ENCODE measurements at regions of chr11 and their contacts with region 1.

Region 1: GRCh38 chr11:19742588-19743292 is 30.1 kb downstream of the NAV2 start:
- DNase-seq: peak; percentile 83
- H3K4me3 ChIP-seq: no peak overlapping the region
- H3K27ac ChIP-seq: peak overlapping the region in 1 of 4 donors; percentile 50
- H3K4me1 ChIP-seq: peaks cover 0 to 9% (median 4%) of the 10 kb centered on the region in 4 donors
- H3K27me3 ChIP-seq: no peaks in the 10 kb centered on the region
- CTCF ChIP-seq: peak; percentile 85 to 93 (median 89)
- EP300 ChIP-seq: no peak
- POLR2A ChIP-seq: no peak

Region 2: GRCh38 chr11:19311308-19312030 is 431.3 kb before region 1 on chr11:
- in situ Hi-C with region 1: loop called in 1 of 4 experiments (anchors 25 kb)
- intact Hi-C with region 1: no loop called
- DNase-seq: peak; percentile 74
- H3K4me3 ChIP-seq: no peak overlapping the region
- H3K27ac ChIP-seq: no peak overlapping the region
- H3K4me1 ChIP-seq: peaks cover under 1 to 12% (median under 1%) of the 10 kb centered on the region in 4 donors
- H3K27me3 ChIP-seq: no peaks in the 10 kb centered on the region
- CTCF ChIP-seq: peak; percentile 65 to 80 (median 75)
- EP300 ChIP-seq: no peak
- POLR2A ChIP-seq: no peak

Region 3: DNA sequence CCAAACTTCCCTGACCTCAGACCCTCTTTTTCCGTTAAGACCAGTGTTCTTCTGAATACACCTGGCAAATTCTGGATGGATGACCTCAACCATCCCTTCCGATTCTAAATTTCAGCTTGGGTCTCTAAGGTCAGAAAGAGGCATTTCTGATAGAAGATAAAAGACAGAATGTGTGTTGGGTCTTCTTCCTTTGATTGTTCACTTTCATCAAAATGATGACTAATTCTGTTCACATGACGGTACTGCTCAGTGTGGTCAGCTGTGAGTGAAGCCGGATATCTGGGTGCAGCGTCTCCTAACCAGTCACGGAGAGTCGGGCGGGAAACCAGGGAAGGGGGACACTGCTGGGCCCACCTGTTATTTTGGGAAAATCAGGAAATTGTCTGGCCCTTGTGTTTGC is 181.7 kb before region 1 on chr11:
- in situ Hi-C with region 1: loop called (anchors 5 to 10 kb)
- intact Hi-C with region 1: loop called (anchors 2 kb)
- DNase-seq: no peak
- H3K4me3 ChIP-seq: no peak overlapping the region
- H3K27ac ChIP-seq: no peak overlapping the region
- H3K4me1 ChIP-seq: peaks cover 0 to 12% (median 7%) of the 10 kb centered on the region in 4 donors
- H3K27me3 ChIP-seq: no peaks in the 10 kb centered on the region
- CTCF ChIP-seq: no peak
- EP300 ChIP-seq: no peak
- POLR2A ChIP-seq: no peak

Region 4: GRCh38 chr11:19890308-19890707 is 147.6 kb after region 1 on chr11:
- in situ Hi-C with region 1: no loop called
- intact Hi-C with region 1: loop called (anchors 10 kb)
- DNase-seq: no peak
- H3K4me3 ChIP-seq: no peak overlapping the region
- H3K27ac ChIP-seq: peak overlapping the region in 2 of 4 donors; percentile 26 to 32
- H3K4me1 ChIP-seq: no peaks in the 10 kb centered on the region
- H3K27me3 ChIP-seq: no peaks in the 10 kb centered on the region
- CTCF ChIP-seq: no peak
- EP300 ChIP-seq: no peak
- POLR2A ChIP-seq: no peak

Measured in transverse colon (tissue), 4 donors.